A673 (cell line): ENCODE measurements at regions of chr12 and their contacts with region 1.

Region 1: DNA sequence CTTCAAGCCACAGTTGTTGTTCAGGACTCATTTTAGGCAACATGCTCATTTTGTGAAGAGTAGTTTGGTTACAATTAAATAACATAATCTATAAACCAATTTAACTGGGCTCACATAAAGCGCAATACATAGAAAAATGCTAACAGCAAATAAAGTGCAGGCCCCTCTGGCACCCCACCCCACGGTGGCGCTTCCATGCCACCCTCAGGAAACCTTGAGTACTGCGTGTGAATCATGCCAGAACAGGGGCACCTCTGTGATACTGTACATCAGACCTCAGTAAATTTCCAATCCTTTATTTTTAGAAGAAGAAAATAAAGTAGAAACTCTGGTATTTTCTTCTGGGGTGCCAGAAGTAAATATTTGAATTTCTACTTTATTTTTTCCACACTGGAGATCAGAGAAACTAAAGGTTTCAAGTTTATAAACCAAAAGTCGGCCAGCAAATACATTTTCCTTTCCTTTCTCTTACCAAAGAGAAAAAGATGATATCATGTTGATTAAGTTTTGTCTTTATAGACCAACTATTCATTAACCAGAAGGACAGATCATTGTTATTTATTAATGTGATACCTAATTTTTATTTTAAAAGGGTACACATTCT is 316.8 kb downstream of the PAWR start:
- DNase-seq: peak; percentile 71
- H3K4me3 ChIP-seq: no peak overlapping the region
- H3K27ac ChIP-seq: no peak overlapping the region
- H3K4me1 ChIP-seq: peaks cover 36% of the 10 kb centered on the region
- H3K27me3 ChIP-seq: no peaks in the 10 kb centered on the region
- CTCF ChIP-seq: peak; percentile 93

Region 2: DNA sequence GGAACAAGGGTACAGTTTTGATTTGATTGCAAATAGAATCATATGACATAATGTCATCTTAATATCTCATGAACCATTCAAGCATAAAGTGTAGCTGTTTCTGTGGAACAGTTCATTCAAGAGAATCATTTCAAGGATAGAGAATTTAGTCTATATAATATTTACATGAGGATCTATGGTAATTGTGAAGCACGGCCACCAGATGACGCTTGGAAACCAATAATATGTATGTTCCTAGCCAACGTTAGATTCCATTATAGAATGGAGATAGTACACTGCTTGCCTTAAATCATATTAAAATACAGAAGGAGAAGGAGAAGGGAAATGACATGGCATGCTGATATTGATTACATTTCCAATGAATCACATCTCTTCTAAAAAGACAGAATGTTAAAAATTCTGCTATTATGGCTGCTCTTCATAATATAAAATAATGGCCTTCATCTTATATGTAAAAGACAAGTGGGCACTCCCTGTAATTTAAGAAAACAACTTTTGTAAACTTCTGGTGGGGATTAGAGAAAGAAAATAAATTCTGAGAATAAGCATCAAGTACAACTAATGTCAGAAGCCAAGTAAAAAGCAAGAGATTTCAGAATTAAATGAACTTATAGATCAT is 1192.3 kb before region 1 on chr12:
- CTCF ChIA-PET with region 1: no interaction called
- POLR2A ChIA-PET with region 1: no interaction called
- intact Hi-C with region 1: loop called (anchors 5 kb)
- DNase-seq: peak; percentile 60
- H3K4me3 ChIP-seq: no peak overlapping the region
- H3K27ac ChIP-seq: no peak overlapping the region
- H3K4me1 ChIP-seq: no peaks in the 10 kb centered on the region
- H3K27me3 ChIP-seq: no peaks in the 10 kb centered on the region
- CTCF ChIP-seq: peak; percentile 76

Region 3: GRCh38 chr12:78470354-78471195 is 903.4 kb before region 1 on chr12:
- CTCF ChIA-PET with region 1: no interaction called
- POLR2A ChIA-PET with region 1: no interaction called
- intact Hi-C with region 1: loop called (anchors 5 kb)
- DNase-seq: peak; percentile 83
- H3K4me3 ChIP-seq: no peak overlapping the region
- H3K27ac ChIP-seq: no peak overlapping the region
- H3K4me1 ChIP-seq: peaks cover 36% of the 10 kb centered on the region
- H3K27me3 ChIP-seq: no peaks in the 10 kb centered on the region
- CTCF ChIP-seq: peak; percentile 88

Region 4: DNA sequence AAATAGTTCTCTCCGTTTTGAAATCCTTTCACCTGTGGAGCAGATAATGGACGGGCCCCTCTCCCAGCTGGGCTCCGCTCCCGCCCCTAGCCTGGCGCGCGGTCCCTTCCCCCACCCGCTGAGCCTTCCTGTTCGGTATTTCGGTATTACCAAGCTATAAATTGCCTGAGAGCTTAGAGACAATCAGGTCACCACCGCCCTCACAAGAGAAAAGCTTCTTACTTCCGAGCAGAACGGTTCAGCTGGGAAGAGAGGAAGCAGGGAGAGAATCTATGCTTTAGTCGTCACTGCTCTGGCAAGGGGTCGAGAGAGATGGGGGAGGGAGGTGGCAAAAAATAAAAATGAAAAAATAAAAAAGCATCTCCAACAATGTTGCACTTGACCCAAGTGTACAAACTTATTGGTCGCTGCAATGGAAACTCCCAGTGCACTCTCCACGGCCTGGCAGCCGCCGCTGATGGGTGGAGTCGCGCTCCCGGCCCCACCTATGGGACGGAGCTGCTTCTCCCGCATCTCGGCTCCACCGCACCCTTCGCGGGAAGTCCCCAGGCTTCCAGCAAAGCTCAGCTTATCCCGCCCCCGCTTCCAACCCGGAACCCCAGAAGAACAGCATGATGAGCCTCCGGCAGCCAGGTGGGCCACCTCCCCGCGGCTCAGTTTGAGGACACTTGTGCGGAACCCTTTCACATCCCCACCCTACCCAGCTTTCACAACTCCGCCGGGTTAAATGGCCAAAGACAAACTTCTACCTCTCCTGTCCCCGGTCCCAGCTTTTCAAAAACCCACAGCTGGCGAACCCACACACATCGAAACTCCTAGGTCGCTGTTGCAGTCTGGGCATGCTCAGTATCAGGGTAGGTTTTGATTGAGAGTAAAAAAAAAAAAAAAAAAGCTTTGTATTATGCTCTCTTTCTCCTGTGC is 510.3 kb before region 1 on chr12:
- CTCF ChIA-PET with region 1: no interaction called
- POLR2A ChIA-PET with region 1: no interaction called
- intact Hi-C with region 1: loop called (anchors 10 kb)
- DNase-seq: peak; percentile 83
- H3K4me3 ChIP-seq: peak overlapping the region; percentile 75
- H3K27ac ChIP-seq: peak overlapping the region; percentile 60
- H3K4me1 ChIP-seq: peaks cover 17% of the 10 kb centered on the region
- H3K27me3 ChIP-seq: no peaks in the 10 kb centered on the region
- CTCF ChIP-seq: no peak

Region 5: GRCh38 chr12:79127271-79127751 is 246.7 kb before region 1 on chr12:
- CTCF ChIA-PET with region 1: no interaction called
- POLR2A ChIA-PET with region 1: no interaction called
- intact Hi-C with region 1: loop called (anchors 10 kb)
- DNase-seq: no peak
- H3K4me3 ChIP-seq: no peak overlapping the region
- H3K27ac ChIP-seq: no peak overlapping the region
- H3K4me1 ChIP-seq: no peaks in the 10 kb centered on the region
- H3K27me3 ChIP-seq: no peaks in the 10 kb centered on the region
- CTCF ChIP-seq: no peak